Brain microvascular endothelial cell (primary cell): ENCODE measurements at regions of chr13 and their contacts with region 1.

Region 1: GRCh38 chr13:101127741-101128353 is 288.5 kb downstream of the NALCN start:
- DNase-seq: peak; percentile 48
- H3K4me3 ChIP-seq: no peak overlapping the region
- H3K27ac ChIP-seq: no peak overlapping the region
- H3K27me3 ChIP-seq: no peaks in the 10 kb centered on the region
- CTCF ChIP-seq: peak; percentile 86

Region 2: GRCh38 chr13:101452519-101453485 is 325.0 kb after region 1 on chr13 and contains the start of gene ITGBL1:
- in situ Hi-C with region 1: no loop called
- DNase-seq: no peak
- H3K4me3 ChIP-seq: peak within 1 kb of the TSS; percentile 62
- H3K27ac ChIP-seq: peak within 1 kb of the TSS; percentile 74
- H3K27me3 ChIP-seq: no peaks in the 10 kb centered on the region
- CTCF ChIP-seq: no peak

Region 3: DNA sequence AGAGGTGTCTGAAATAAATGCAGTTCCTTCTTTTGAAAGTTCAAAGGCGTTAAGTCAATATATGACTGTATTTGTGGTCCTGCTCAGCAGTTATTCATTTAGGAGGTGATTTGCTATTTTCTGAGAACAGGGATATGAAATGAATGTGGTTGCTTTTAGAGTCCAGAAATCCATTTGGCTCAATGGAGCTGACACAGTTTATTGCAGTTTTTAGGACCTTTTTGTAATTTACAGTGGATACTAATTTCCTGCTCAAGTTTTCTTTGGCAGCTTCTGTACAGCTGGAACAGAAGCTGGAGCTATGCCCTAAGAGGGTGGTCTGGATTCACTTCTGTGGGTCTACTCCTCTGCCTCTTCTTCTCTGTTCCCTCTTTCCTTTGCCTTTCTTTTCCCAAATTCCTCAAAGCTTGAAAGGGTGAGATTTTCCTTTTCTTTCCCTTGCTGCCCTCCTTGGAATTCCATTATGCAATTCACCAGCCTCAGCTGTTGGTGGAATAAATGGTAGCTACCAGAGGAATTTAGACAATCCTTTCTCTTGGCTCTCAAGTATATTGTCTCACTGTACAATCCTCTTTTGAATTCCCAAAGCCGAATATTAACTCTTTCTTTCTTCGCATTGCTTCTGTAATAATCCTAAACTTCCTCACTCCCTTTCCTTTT is 364.5 kb after region 1 on chr13:
- in situ Hi-C with region 1: loop called (anchors 25 kb)
- DNase-seq: no peak
- H3K4me3 ChIP-seq: no peak overlapping the region
- H3K27ac ChIP-seq: no peak overlapping the region
- H3K27me3 ChIP-seq: no peaks in the 10 kb centered on the region
- CTCF ChIP-seq: no peak

Region 4: GRCh38 chr13:101757446-101758039 is 629.7 kb after region 1 on chr13:
- in situ Hi-C with region 1: loop called (anchors 25 kb)
- DNase-seq: no peak
- H3K4me3 ChIP-seq: no peak overlapping the region
- H3K27ac ChIP-seq: no peak overlapping the region
- H3K27me3 ChIP-seq: no peaks in the 10 kb centered on the region
- CTCF ChIP-seq: peak; percentile 46